CD4-positive, alpha-beta memory T cell (primary cell): ENCODE measurements at regions of chr12 and their contacts with region 1.

Region 1: DNA sequence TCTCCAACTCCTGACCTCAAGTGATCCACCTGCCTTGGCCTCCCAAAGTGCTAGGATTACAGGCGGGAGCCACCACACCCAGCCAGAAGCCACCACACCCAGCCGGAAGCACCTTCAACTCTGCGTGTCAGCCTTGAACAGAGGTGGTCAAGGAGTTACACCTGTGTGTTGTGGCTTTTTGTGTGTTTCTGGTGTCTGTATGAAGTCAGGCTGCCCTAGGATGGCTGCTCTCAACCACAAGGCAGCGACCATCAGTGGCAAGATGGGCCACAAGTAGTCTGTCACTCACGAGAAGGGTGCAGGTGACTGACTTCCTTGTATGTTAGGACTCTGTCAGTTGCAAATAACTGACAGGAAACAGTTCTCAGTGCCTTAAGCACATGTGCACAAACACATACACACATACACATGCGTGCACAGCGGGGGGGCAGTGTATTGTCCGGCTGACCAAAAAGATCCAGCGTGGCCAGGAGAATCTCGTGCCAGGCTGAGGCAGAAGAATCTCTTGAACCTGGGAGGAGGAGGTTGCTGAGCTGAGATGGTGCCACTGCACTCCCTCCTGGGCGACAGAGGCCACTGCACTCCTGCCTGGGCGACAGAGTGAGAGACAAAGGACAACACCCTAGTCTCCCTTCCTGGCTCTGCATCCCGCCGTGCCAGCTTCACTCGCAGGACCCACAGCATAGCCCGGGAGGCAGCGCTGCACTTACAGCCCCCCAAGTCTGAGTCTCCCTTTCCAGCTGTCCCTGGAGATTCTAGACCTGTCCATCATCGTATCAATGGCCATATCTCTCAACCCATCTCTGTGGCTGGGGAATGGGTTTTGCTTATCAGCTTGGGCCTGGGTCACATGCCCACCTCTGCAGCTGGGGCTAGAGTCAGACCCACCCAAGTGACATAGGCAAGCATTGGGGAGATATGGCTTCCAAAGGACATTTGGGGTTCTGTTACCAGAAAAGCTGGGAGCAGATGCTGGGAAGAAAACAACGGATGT is 13.7 kb downstream of the P2RX4 start:
- DNase-seq: peak; percentile 34 to 64 (median 53)
- H3K4me3 ChIP-seq: peak overlapping the region in 1 of 2 donors; percentile 0
- H3K4me3 Mint-ChIP-seq: peak overlapping the region in 7 of 8 donors; percentile 19 to 84 (median 72)
- H3K27ac ChIP-seq: peak overlapping the region; percentile 47
- H3K27ac Mint-ChIP-seq: peak overlapping the region; percentile 86 to 97 (median 95)
- H3K4me1 ChIP-seq: peaks cover 52% of the 10 kb centered on the region
- H3K4me1 Mint-ChIP-seq: peaks cover 32 to 61% (median 44%) of the 10 kb centered on the region in 4 donors
- H3K27me3 ChIP-seq: no peaks in the 10 kb centered on the region
- H3K27me3 Mint-ChIP-seq: no peaks in the 10 kb centered on the region

Region 2: DNA sequence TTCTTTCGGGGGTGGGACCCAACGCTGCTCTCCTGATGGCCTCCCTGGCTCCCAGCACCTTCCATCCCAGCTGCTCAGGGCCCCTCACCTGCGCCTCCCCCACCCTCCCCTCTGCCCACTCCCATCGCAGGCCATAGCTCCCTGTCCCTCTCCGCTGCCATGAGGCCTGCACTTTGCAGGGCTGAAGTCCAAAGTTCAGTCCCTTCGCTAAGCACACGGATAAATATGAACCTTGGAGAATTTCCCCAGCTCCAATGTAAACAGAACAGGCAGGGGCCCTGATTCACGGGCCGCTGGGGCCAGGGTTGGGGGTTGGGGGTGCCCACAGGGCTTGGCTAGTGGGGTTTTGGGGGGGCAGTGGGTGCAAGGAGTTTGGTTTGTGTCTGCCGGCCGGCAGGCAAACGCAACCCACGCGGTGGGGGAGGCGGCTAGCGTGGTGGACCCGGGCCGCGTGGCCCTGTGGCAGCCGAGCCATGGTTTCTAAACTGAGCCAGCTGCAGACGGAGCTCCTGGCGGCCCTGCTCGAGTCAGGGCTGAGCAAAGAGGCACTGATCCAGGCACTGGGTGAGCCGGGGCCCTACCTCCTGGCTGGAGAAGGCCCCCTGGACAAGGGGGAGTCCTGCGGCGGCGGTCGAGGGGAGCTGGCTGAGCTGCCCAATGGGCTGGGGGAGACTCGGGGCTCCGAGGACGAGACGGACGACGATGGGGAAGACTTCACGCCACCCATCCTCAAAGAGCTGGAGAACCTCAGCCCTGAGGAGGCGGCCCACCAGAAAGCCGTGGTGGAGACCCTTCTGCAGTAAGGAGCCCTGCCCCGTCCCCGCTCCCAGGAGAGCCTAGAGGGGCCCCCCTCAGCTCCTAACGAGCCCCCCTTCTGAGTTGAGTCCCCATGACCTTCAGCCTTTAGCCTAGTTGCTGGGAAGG is 245.0 kb before region 1 on chr12 and contains the start of gene HNF1A:
- CTCF ChIA-PET with region 1: no interaction called
- POLR2A ChIA-PET with region 1: no interaction called
- intact Hi-C with region 1: no loop called
- DNase-seq: no peak
- H3K4me3 ChIP-seq: no peak within 1 kb of the TSS
- H3K4me3 Mint-ChIP-seq: no peak within 1 kb of the TSS
- H3K27ac ChIP-seq: no peak within 1 kb of the TSS
- H3K27ac Mint-ChIP-seq: peak within 1 kb of the TSS in 1 of 7 donors; percentile 68
- H3K4me1 ChIP-seq: no peaks in the 10 kb centered on the region
- H3K4me1 Mint-ChIP-seq: no peaks in the 10 kb centered on the region
- H3K27me3 ChIP-seq: no peaks in the 10 kb centered on the region
- H3K27me3 Mint-ChIP-seq: no peaks in the 10 kb centered on the region
- total RNA-seq, gene HNF1A: not detected

Region 3: DNA sequence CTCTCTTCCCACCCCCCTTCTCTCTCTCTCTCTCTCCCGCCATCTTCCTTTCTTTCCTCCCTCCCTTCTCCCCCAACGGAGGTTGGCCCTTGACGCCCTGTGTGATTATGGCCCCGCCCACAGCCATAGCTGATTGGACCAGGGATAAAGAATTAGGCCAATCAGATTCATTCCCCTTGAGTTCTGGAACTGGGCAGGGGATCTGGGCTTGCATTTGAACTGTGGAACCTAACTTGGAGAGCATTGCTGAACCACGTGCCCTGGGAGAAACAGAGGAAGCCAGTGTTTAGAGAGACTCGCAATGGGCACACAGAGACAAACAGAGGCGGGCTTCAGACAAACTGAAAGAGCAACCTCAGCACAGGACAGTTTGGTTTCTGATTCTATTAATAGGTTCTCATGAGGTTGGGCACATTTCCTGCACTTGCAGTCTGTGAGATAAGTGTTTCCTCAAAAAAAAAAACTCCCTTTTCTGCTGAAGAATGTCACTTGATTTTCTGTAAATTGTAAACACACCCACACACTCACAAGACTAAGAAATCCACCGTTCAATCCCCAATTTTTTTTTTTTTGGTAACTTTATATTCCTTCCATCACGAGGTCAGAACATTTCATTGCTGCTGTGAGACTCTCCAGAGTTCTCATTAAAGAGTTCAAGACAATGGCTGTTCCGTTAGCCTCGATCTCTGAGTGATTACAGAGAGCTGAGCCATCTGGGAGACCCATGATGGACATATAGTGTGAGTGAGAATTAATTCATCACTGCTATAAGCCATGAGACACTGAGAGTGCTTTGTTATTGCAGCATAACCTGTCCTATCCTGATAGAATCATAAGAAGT is 94.4 kb before region 1 on chr12:
- CTCF ChIA-PET with region 1: no interaction called
- POLR2A ChIA-PET with region 1: interaction called, 15 read pairs
- intact Hi-C with region 1: loop called (anchors 1 kb)
- DNase-seq: peak; percentile 79 to 88 (median 84)
- H3K4me3 ChIP-seq: peak overlapping the region; percentile 31 to 36
- H3K4me3 Mint-ChIP-seq: peak overlapping the region; percentile 79 to 91 (median 86)
- H3K27ac ChIP-seq: peak overlapping the region; percentile 53
- H3K27ac Mint-ChIP-seq: peak overlapping the region; percentile 88 to 97 (median 93)
- H3K4me1 ChIP-seq: peaks cover 70% of the 10 kb centered on the region
- H3K4me1 Mint-ChIP-seq: peaks cover 57 to 93% (median 68%) of the 10 kb centered on the region in 4 donors
- H3K27me3 ChIP-seq: no peaks in the 10 kb centered on the region
- H3K27me3 Mint-ChIP-seq: no peaks in the 10 kb centered on the region

Region 4: GRCh38 chr12:121240484-121241101 is 17.0 kb after region 1 on chr12:
- CTCF ChIA-PET with region 1: interaction called, 57 read pairs
- POLR2A ChIA-PET with region 1: interaction called, 89 read pairs
- intact Hi-C with region 1: loop called (anchors 1 kb)
- DNase-seq: peak; percentile 94 to 98 (median 95)
- H3K4me3 ChIP-seq: peak overlapping the region; percentile 47 to 54
- H3K4me3 Mint-ChIP-seq: peak overlapping the region; percentile 82 to 92 (median 90)
- H3K27ac ChIP-seq: peak overlapping the region; percentile 76
- H3K27ac Mint-ChIP-seq: peak overlapping the region; percentile 95 to 100 (median 99)
- H3K4me1 ChIP-seq: peaks cover 38% of the 10 kb centered on the region
- H3K4me1 Mint-ChIP-seq: peaks cover 26 to 55% (median 38%) of the 10 kb centered on the region in 4 donors
- H3K27me3 ChIP-seq: no peaks in the 10 kb centered on the region
- H3K27me3 Mint-ChIP-seq: no peaks in the 10 kb centered on the region